Prostate gland (tissue), 2 donors: ENCODE measurements at regions of chr10 and their contacts with region 1.

Region 1: DNA sequence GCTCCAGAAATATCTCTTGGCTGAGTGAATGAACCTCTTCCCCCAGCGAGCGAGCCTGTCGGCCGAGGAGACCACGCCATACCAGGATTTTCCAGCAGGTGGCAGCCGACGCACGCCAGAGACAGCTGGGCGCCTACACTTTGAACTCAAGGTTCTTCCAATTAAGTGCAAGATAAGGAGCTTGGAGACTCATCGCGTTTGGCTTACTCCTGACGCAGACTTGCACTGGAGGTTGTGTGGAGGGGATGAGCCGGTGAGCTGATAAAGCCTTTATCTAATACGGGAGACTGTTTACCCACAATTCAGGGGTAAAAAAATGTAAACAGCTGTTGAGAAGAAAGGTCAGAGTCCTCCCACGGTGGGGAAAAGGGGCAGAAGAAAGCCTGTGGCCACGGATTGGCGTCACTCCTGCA is 45.9 kb upstream of the EMX2 start:
- DNase-seq: peak; percentile 67
- H3K4me3 ChIP-seq: no peak overlapping the region
- H3K27ac ChIP-seq: no peak overlapping the region
- H3K4me1 ChIP-seq: no peaks in the 10 kb centered on the region
- H3K27me3 ChIP-seq: no peaks in the 10 kb centered on the region
- CTCF ChIP-seq: peak; percentile 66 to 94 (median 88)
- POLR2A ChIP-seq: no peak

Region 2: DNA sequence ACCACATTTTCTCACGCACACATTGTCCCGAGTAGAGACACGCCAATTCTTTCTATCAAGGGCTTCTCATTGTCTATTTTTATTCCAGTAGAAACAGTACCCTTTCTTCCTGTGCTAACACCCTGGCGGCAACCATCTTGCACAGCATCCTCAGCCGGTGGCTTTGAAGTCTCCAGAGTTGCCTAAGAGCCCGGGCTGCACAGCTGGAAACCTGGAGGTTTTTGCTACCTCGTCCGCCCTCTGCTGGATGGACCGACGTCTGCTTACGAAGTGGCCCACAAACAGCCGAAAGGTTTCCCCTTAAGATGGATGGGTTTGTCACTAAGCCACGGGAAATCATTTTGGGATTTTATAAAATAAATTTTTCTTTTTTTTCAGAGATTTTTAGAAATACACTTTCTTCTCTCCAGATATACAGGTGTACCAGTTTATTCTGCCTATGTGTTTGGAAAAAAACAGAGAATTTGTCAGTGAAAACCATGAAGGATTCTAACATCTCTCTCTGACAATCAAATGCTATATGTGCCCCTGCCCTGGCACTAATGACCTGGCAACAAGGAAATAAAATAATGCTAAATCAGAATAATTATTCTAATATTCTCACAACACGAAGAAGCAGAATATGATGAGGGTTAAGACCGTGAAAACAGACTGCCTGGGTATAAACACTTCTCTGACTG is 927.3 kb after region 1 on chr10:
- intact Hi-C with region 1: loop called (anchors 5 kb)
- DNase-seq: peak; percentile 63
- H3K4me3 ChIP-seq: no peak overlapping the region
- H3K27ac ChIP-seq: no peak overlapping the region
- H3K4me1 ChIP-seq: no peaks in the 10 kb centered on the region
- H3K27me3 ChIP-seq: no peaks in the 10 kb centered on the region
- CTCF ChIP-seq: peak in 3 of 4 experiments; percentile 51 to 70 (median 69)
- POLR2A ChIP-seq: no peak

Region 3: GRCh38 chr10:118459726-118460193 is 963.1 kb after region 1 on chr10:
- intact Hi-C with region 1: loop called (anchors 10 kb)
- DNase-seq: peak; percentile 59
- H3K4me3 ChIP-seq: no peak overlapping the region
- H3K27ac ChIP-seq: peak overlapping the region in 1 of 2 donors; percentile 28
- H3K4me1 ChIP-seq: no peaks in the 10 kb centered on the region
- H3K27me3 ChIP-seq: no peaks in the 10 kb centered on the region
- CTCF ChIP-seq: peak in 3 of 4 experiments; percentile 68 to 70 (median 69)
- POLR2A ChIP-seq: no peak